Endothelial cell of umbilical vein (primary cell): ENCODE measurements at regions of chr18 and their contacts with region 1.

Region 1: GRCh38 chr18:70421471-70422390 is 132.9 kb downstream of the SOCS6 start:
- DNase-seq: peak; percentile 99
- H3K4me3 ChIP-seq: peak overlapping the region in 2 of 3 experiments; percentile 7 to 62
- H3K27ac ChIP-seq: peak overlapping the region; percentile 99
- H3K4me1 ChIP-seq: peaks cover 38% of the 10 kb centered on the region
- H3K27me3 ChIP-seq: no peaks in the 10 kb centered on the region
- CTCF ChIP-seq: no peak
- POLR2A ChIP-seq: no peak

Region 2: GRCh38 chr18:70082430-70082829 is 339.3 kb before region 1 on chr18:
- CTCF ChIA-PET with region 1: no interaction called
- POLR2A ChIA-PET with region 1: no interaction called
- dilution Hi-C with region 1: no loop called
- intact Hi-C with region 1: no loop called
- DNase-seq: no peak
- H3K4me3 ChIP-seq: no peak overlapping the region
- H3K27ac ChIP-seq: no peak overlapping the region
- H3K4me1 ChIP-seq: no peaks in the 10 kb centered on the region
- H3K27me3 ChIP-seq: no peaks in the 10 kb centered on the region
- CTCF ChIP-seq: no peak
- POLR2A ChIP-seq: no peak

Region 3: GRCh38 chr18:70172225-70172624 is 249.5 kb before region 1 on chr18:
- CTCF ChIA-PET with region 1: no interaction called
- POLR2A ChIA-PET with region 1: no interaction called
- dilution Hi-C with region 1: no loop called
- intact Hi-C with region 1: no loop called
- DNase-seq: peak; percentile 27
- H3K4me3 ChIP-seq: no peak overlapping the region
- H3K27ac ChIP-seq: no peak overlapping the region
- H3K4me1 ChIP-seq: no peaks in the 10 kb centered on the region
- H3K27me3 ChIP-seq: no peaks in the 10 kb centered on the region
- CTCF ChIP-seq: peak; percentile 16 to 19
- POLR2A ChIP-seq: no peak

Region 4: DNA sequence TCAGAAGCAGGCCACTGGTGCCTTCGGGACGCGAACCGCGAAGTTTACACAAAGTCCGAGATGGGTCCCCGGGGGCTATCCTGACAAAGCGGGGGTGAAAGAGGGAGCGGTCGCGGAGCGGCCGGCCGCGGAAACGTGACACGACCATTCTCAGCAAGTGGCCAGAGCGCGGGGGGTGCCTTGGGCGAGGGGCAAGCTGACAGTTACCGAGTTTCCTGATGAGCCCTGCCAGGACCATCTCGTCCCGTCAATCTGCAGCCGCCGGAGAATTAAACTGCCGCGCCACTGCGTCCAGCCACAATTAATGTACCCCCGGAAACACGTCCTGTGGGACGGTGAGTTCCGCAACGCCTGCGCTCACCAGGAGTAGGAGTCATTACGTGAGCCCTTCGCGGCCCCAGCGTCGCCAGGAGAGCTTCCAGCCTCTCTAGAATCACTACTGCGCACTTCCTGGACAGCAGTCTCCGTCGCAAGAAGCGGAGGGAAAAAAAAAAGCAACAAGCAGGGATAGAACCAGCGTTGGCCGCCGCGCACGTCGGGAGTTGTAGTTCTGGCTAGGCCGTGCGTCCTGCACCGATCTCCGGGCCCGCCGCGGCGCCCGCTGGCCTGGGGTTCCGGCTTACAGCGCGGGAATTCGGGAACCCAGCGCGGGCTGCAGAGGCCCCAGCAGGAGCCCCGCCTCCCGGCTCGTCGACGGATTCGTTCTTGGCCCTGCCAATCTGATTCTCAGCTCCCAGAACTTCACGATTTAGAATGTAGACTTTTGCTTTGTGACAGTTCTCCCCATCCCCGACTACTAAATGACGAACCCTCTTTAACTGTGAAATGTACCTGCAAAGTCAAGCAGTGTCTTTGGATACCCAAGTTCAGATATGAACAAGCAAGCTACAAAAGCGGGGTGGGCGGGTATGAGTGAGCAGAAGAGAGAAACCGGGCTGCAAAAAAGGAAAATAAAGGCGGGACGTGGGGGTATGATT is 216.0 kb before region 1 on chr18 and contains the start of gene RTTN:
- CTCF ChIA-PET with region 1: interaction called, 4 read pairs
- POLR2A ChIA-PET with region 1: interaction called, 3 read pairs
- dilution Hi-C with region 1: no loop called
- intact Hi-C with region 1: loop called (anchors 1 kb)
- DNase-seq: peak; percentile 96
- H3K4me3 ChIP-seq: peak within 1 kb of the TSS; percentile 89 to 96 (median 95)
- H3K27ac ChIP-seq: peak within 1 kb of the TSS; percentile 87
- H3K4me1 ChIP-seq: peaks cover 8% of the 10 kb centered on the region
- H3K27me3 ChIP-seq: peaks cover 0 to 9% of the 10 kb centered on the region in 2 experiments
- CTCF ChIP-seq: no peak
- POLR2A ChIP-seq: no peak
- total RNA-seq, gene RTTN: 16.7 and 17.4 TPM in 2 replicates

Region 5: DNA sequence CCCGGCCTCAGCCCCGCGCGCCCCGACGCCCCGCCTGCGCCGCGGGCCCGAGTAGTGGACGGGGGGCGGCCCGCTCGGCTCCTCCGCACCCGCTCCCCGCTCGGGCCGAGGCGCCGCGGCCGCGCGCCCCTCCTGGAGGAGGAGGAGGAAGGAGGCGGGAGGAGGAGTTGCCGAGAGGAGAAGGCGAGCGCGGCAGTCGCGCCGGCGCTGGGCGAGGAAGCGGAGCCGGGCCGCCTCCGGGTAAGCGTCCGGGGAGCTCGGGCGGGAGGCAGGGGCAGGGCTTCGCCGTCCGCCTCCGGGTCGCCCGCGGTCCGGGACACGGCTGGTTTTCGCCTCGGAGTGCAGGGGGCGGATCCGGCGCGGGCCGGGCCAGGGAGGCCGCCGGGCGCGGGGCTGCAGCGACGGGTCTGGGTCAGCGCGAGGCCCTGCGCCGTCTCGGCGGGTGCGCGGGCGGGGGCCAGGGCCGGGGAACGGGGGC is 132.8 kb before region 1 on chr18 and contains the start of gene SOCS6:
- CTCF ChIA-PET with region 1: interaction called, 4 read pairs
- POLR2A ChIA-PET with region 1: no interaction called
- dilution Hi-C with region 1: no loop called
- intact Hi-C with region 1: loop called (anchors 1 kb)
- DNase-seq: peak; percentile 60
- H3K4me3 ChIP-seq: peak within 1 kb of the TSS; percentile 79 to 98 (median 90)
- H3K27ac ChIP-seq: peak within 1 kb of the TSS; percentile 73
- H3K4me1 ChIP-seq: peaks cover 22% of the 10 kb centered on the region
- H3K27me3 ChIP-seq: no peaks in the 10 kb centered on the region
- CTCF ChIP-seq: no peak
- POLR2A ChIP-seq: peak; percentile 75
- total RNA-seq, gene SOCS6: 13.2 and 15.0 TPM in 2 replicates

Region 6: GRCh38 chr18:70337139-70337972 is 84.4 kb before region 1 on chr18:
- CTCF ChIA-PET with region 1: interaction called, 3 read pairs
- POLR2A ChIA-PET with region 1: no interaction called
- dilution Hi-C with region 1: no loop called
- intact Hi-C with region 1: loop called (anchors 5 kb)
- DNase-seq: peak; percentile 69
- H3K4me3 ChIP-seq: no peak overlapping the region
- H3K27ac ChIP-seq: no peak overlapping the region
- H3K4me1 ChIP-seq: peaks cover 9% of the 10 kb centered on the region
- H3K27me3 ChIP-seq: no peaks in the 10 kb centered on the region
- CTCF ChIP-seq: no peak
- POLR2A ChIP-seq: no peak

Region 7: DNA sequence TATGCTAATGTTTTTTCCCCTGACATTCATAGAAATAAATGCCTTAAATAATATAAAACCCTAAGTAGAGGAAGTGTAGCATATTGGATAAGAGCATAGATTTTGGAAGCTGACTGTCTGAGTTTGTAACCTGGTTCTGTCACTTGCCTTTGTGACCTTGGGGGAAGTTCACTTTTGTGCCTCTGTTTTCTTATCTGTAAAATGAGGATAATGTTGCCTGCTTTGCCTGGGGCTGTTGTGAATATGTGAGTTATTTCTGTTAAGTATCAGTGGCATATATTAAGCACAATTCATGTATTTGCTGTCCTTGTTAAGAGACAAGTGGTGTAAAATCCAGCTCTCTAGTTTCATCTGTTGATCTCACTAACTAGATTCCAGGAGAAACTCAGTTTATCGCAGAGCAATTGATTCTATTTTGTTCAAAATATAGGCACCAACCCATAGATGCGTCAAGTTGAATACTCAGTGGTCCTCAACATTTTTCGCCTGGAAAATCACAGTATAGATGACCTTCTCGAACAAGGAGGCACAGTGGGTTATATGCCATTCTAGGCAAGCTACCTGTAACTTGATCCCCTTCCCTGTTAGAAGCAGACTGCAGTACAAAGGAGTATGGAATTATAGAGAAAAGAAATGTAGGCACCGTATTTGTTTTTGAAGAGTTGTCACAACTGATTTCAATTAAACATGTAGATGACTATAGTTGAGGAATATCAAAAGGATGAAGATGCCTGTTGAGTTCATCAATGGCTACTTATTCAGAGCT is 65.9 kb before region 1 on chr18:
- CTCF ChIA-PET with region 1: no interaction called
- POLR2A ChIA-PET with region 1: no interaction called
- dilution Hi-C with region 1: no loop called
- intact Hi-C with region 1: loop called (anchors 1 kb)
- DNase-seq: no peak
- H3K4me3 ChIP-seq: no peak overlapping the region
- H3K27ac ChIP-seq: no peak overlapping the region
- H3K4me1 ChIP-seq: peaks cover 9% of the 10 kb centered on the region
- H3K27me3 ChIP-seq: no peaks in the 10 kb centered on the region
- CTCF ChIP-seq: no peak
- POLR2A ChIP-seq: no peak

Region 8: DNA sequence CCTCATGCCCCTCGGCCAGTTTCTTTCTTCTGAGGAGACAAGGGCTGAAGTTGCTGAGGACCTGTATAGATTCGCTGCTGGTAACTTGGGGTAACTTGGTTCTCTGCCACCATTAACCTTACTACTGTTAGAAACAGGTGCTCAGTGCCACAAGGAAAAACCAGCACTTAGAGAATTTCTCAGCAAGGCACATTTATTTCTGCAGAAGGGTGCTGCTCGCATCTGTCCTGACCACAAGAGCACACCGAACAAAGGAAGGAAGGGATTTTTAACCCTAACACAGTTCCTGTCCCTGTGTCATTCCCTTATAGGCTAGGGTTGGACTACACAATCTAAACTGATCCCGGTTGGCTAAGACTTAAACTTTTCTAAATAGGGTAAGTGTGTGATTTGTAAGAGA is 21.2 kb after region 1 on chr18:
- CTCF ChIA-PET with region 1: no interaction called
- POLR2A ChIA-PET with region 1: no interaction called
- dilution Hi-C with region 1: no loop called
- intact Hi-C with region 1: no loop called
- DNase-seq: no peak
- H3K4me3 ChIP-seq: no peak overlapping the region
- H3K27ac ChIP-seq: no peak overlapping the region
- H3K4me1 ChIP-seq: no peaks in the 10 kb centered on the region
- H3K27me3 ChIP-seq: peaks cover 0 to 3% of the 10 kb centered on the region in 2 experiments
- CTCF ChIP-seq: no peak
- POLR2A ChIP-seq: no peak